Naive thymus-derived CD4-positive, alpha-beta T cell (primary cell): ENCODE measurements at regions of chr1 and their contacts with region 1.

Region 1: GRCh38 chr1:40849801-40850592 is 12.2 kb downstream of the CITED4 start:
- DNase-seq: peak; percentile 63 to 87 (median 77)
- ATAC-seq: peak; percentile 98
- H3K4me3 ChIP-seq: no peak overlapping the region
- H3K4me3 Mint-ChIP-seq: peak overlapping the region; percentile 12 to 73 (median 60)
- H3K27ac ChIP-seq: no peak overlapping the region
- H3K27ac Mint-ChIP-seq: peak overlapping the region in 6 of 9 donors; percentile 54 to 78 (median 72)
- H3K4me1 ChIP-seq: peaks cover 0 to under 1% of the 10 kb centered on the region in 2 donors
- H3K4me1 Mint-ChIP-seq: peaks cover 0 to 34% (median 23%) of the 10 kb centered on the region in 7 donors
- H3K27me3 ChIP-seq: no peaks in the 10 kb centered on the region
- H3K27me3 Mint-ChIP-seq: no peaks in the 10 kb centered on the region

Region 2: DNA sequence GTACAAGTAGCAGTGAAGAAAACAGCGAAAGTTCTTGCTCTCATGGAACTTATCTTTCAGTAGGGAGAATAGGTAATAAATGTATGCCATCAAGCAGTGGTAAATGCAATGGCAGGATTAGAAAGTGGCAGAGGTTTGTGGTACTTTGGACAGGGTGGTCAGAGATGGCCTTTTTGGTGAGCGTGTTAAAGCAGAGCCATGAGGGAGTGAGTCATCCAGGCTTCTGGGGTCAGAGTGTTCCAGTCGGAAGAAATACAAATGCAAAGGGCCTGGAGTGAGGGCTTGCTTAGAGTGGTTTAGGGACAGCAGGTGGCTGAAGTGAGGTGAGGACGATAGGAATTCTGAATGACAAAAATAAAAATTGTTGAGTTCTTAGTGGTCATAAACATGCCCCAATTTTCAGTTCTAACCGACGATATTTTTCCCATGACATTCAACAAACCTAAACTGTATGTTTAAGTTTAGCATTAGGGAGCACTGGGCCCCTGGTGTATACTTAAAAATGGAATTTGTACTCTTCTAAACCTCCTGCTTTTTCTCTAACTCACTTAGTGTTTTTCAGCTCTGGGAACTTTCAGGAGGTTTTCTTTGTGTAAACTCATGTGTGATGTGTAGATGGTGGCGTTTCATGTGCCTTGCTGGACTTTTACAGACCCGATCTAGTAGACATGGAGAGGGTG is 1567.3 kb before region 1 on chr1:
- CTCF ChIA-PET with region 1: no interaction called
- POLR2A ChIA-PET with region 1: no interaction called
- intact Hi-C with region 1: no loop called
- DNase-seq: no peak
- ATAC-seq: no peak
- H3K4me3 ChIP-seq: no peak overlapping the region
- H3K4me3 Mint-ChIP-seq: no peak overlapping the region
- H3K27ac ChIP-seq: no peak overlapping the region
- H3K27ac Mint-ChIP-seq: peak overlapping the region in 6 of 9 donors; percentile 11 to 85 (median 52)
- H3K4me1 ChIP-seq: peaks cover 7 to 8% of the 10 kb centered on the region in 2 donors
- H3K4me1 Mint-ChIP-seq: peaks cover 4 to 22% (median 18%) of the 10 kb centered on the region in 7 donors
- H3K27me3 ChIP-seq: no peaks in the 10 kb centered on the region
- H3K27me3 Mint-ChIP-seq: no peaks in the 10 kb centered on the region

Region 3: DNA sequence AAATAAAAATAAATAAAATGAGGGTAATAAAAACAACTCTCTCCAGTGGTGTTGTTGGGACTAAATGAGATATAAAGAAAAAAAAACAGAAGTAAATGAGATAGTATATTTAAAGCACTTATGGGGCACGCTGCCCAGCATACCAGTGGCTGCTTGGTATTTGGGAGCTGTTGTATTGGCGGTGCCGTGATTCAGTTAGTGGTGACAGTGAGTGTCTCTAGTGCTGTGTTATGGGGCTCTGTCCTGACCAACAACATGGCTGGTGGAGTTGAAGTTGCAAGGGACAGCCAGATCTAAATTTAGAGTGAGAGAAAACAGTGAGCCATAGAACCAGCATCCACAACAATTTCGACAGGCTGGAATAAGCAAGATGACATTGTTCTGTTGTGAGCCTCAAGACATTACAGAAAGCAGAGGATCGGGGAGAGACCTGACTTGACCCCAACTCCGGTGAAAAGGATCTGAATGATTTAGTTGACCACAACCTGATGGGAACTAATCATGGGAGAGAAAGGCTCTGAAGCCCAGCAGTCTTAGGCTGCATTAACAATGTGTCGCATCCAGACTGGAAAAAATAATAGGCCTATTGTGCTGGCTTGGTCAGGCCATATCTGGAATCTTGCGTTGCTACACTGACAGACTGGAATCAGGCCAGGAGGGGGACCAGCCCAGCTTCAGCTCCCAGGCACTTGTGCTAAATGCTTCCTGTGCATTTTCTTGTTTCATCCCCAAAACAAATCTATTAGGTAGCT is 897.5 kb before region 1 on chr1:
- CTCF ChIA-PET with region 1: no interaction called
- POLR2A ChIA-PET with region 1: no interaction called
- intact Hi-C with region 1: no loop called
- DNase-seq: no peak
- ATAC-seq: no peak
- H3K4me3 ChIP-seq: no peak overlapping the region
- H3K4me3 Mint-ChIP-seq: no peak overlapping the region
- H3K27ac ChIP-seq: no peak overlapping the region
- H3K27ac Mint-ChIP-seq: peak overlapping the region in 2 of 9 donors; percentile 39 to 63
- H3K4me1 ChIP-seq: peaks cover 7 to 18% of the 10 kb centered on the region in 2 donors
- H3K4me1 Mint-ChIP-seq: peaks cover 12 to 20% (median 15%) of the 10 kb centered on the region in 7 donors
- H3K27me3 ChIP-seq: no peaks in the 10 kb centered on the region
- H3K27me3 Mint-ChIP-seq: peaks cover 0 to 7% (median 0%) of the 10 kb centered on the region in 5 donors

Region 4: DNA sequence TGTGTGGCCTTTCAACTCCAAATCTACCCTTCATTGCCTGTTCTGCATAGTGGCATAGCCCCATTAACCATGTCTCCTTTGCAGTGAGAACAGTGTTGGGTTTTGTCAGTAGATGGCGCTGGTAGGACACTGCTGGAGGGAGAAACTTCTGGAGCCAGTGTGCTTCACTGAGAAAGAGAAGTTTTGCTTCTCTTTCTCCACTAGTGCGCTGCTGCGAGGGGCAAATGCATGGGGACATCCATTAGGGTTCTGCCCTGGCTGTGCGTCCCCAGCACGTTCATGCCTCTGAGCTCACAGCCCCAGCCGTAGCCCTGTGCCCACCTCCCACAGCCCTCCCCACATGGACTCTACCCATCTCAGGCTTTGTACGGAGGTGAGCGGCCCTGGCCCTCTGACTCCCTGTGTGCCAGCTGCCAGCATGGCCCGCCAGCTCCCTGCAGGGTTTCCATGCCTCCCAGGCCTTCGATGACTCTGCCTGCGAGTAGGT is 237.6 kb before region 1 on chr1:
- CTCF ChIA-PET with region 1: no interaction called
- POLR2A ChIA-PET with region 1: no interaction called
- intact Hi-C with region 1: loop called (anchors 1 kb)
- DNase-seq: peak in 8 of 9 donors; percentile 45 to 75 (median 68)
- ATAC-seq: peak; percentile 94
- H3K4me3 ChIP-seq: no peak overlapping the region
- H3K4me3 Mint-ChIP-seq: no peak overlapping the region
- H3K27ac ChIP-seq: no peak overlapping the region
- H3K27ac Mint-ChIP-seq: no peak overlapping the region
- H3K4me1 ChIP-seq: no peaks in the 10 kb centered on the region
- H3K4me1 Mint-ChIP-seq: peaks cover 0 to 4% (median 0%) of the 10 kb centered on the region in 7 donors
- H3K27me3 ChIP-seq: no peaks in the 10 kb centered on the region
- H3K27me3 Mint-ChIP-seq: peaks cover 0 to 7% (median 0%) of the 10 kb centered on the region in 5 donors

Region 5: DNA sequence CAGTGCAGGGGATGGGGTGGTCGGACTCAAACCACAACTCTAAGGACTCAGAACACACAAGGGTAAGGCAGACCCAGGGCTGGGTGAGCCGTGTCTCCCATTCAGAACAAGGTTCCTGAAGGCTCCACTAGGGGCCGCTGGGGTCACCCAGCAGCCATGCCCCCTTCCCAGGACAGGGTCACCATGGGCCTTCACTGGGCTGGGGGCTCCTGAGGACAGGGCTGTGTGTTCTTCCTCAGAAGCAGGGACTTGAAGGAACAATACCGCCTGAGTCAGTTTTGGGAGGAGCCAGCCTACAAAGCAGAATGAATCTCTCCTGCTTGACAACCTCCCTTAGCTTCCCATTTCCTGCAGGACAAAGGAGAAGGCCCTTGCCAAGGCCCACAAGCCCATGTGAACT is 199.9 kb before region 1 on chr1:
- CTCF ChIA-PET with region 1: no interaction called
- POLR2A ChIA-PET with region 1: no interaction called
- intact Hi-C with region 1: loop called in 1 of 2 experiments (anchors 1 kb)
- DNase-seq: no peak
- ATAC-seq: no peak
- H3K4me3 ChIP-seq: no peak overlapping the region
- H3K4me3 Mint-ChIP-seq: no peak overlapping the region
- H3K27ac ChIP-seq: no peak overlapping the region
- H3K27ac Mint-ChIP-seq: no peak overlapping the region
- H3K4me1 ChIP-seq: no peaks in the 10 kb centered on the region
- H3K4me1 Mint-ChIP-seq: peaks cover 0 to 7% (median 4%) of the 10 kb centered on the region in 7 donors
- H3K27me3 ChIP-seq: no peaks in the 10 kb centered on the region
- H3K27me3 Mint-ChIP-seq: peaks cover 2 to 16% (median 12%) of the 10 kb centered on the region in 5 donors

Region 6: DNA sequence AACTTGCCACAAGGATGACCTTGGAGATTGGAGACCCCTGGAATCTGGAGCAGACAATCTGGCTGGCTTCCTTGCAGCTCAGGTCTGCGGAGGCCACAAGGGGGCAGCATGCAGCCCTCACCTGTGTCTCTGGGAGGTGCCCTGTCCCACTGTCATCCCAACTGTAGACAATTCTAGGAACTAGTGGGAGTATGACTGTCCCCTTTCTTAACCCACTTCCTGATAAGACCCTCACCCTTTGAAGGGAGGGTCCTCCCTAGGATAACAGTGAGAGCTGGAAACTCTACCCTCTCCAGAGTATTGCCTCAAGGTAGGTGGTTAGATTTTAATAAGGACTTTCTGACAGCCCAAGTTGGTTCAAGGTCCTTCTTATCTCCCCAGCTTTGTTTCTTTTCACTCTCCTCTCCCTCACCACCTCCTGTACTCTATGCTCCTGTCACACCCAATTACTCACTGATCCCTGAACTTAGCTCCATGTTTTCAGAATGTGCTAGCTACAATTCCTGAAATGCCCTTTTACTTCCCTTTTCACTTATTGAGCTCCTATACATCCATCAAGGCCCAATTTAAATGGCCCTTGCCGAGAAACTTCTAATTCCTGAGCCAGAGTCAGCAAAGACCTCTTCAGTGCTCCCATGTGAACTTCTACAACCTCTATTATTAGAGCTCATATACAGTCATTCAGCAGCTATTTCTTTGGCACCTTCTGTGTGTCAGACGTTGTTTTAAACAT is 75.6 kb before region 1 on chr1:
- CTCF ChIA-PET with region 1: interaction called, 106 read pairs
- POLR2A ChIA-PET with region 1: interaction called, 4 read pairs
- intact Hi-C with region 1: loop called (anchors 1 kb)
- DNase-seq: peak; percentile 46 to 70 (median 54)
- ATAC-seq: peak; percentile 72
- H3K4me3 ChIP-seq: no peak overlapping the region
- H3K4me3 Mint-ChIP-seq: no peak overlapping the region
- H3K27ac ChIP-seq: no peak overlapping the region
- H3K27ac Mint-ChIP-seq: peak overlapping the region in 3 of 9 donors; percentile 1 to 61 (median 10)
- H3K4me1 ChIP-seq: no peaks in the 10 kb centered on the region
- H3K4me1 Mint-ChIP-seq: peaks cover 0 to 25% (median 2%) of the 10 kb centered on the region in 7 donors
- H3K27me3 ChIP-seq: no peaks in the 10 kb centered on the region
- H3K27me3 Mint-ChIP-seq: no peaks in the 10 kb centered on the region

Region 7: DNA sequence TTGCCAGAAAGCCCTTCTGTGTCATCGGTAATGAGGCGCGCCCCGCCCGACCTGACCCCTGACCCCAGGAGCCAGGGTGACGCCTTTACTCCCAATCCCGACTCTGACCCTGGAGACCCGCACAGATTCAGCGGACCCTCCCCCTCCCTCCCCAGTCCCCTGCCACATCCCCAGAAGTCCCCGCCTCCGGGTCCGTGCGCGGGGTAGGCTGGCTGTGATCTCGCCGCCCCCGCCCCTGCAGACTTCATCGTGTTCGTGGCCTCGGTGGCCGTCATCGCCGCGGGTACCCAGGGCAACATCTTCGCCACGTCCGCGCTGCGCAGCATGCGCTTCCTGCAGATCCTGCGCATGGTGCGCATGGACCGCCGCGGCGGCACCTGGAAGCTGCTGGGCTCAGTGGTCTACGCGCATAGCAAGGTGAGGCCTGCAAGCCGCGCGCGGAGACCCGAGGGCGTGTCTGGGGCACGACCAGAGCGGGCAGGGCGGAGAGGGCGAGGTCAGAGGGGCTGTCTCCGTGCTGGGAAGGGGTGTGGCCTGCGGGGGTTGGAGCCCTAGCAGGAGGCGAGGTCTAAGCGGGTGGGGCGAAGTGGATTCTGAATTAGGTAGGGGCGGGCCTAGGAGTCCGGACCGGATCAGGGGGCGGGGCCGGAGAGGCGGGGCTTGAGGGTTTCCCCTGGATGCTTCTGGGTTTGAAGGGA is 31.6 kb before region 1 on chr1:
- CTCF ChIA-PET with region 1: interaction called, 3 read pairs
- POLR2A ChIA-PET with region 1: interaction called, 3 read pairs
- intact Hi-C with region 1: loop called in 1 of 2 experiments (anchors 2 kb)
- DNase-seq: peak; percentile 66 to 90 (median 86)
- ATAC-seq: peak; percentile 98
- H3K4me3 ChIP-seq: peak overlapping the region; percentile 68
- H3K4me3 Mint-ChIP-seq: peak overlapping the region; percentile 76 to 89 (median 83)
- H3K27ac ChIP-seq: peak overlapping the region; percentile 50
- H3K27ac Mint-ChIP-seq: peak overlapping the region; percentile 74 to 89 (median 83)
- H3K4me1 ChIP-seq: peaks cover 0 to 5% of the 10 kb centered on the region in 2 donors
- H3K4me1 Mint-ChIP-seq: peaks cover 0 to 21% (median 11%) of the 10 kb centered on the region in 7 donors
- H3K27me3 ChIP-seq: no peaks in the 10 kb centered on the region
- H3K27me3 Mint-ChIP-seq: peaks cover 0 to 8% (median 0%) of the 10 kb centered on the region in 5 donors